HEK293 (cell line): ENCODE measurements at regions of chr11 and their contacts with region 1.

Region 1: DNA sequence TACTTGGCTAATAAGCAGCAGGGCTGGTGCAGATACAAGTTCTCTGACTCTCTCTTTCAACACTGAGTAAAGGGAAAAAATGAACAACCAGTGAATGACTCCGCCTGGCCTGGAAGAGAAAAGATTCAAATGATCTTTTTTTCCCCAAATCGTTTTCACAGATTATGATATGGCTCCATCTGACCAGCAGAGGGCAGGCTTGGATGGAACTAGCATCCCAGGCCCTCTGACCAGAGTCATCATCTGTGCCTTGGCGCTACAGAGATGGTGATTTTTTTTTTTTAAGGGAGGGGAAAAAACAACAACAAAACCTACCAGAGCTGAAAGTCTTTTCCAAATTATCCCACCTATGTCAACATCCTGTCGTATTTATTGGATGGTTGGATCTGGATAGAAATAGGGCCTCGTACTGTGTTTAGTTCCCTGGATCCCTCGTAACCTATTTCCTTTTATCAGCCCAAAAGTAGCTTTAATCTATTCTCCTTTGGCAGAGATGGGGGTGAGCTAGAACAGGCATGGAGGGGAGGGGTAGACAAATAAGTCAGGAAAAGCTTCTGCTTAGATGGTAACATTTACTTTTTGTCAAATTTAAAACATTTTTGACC is 69.7 kb downstream of the PRSS23 start:
- H3K4me3 ChIP-seq: no peak overlapping the region
- H3K27ac ChIP-seq: no peak overlapping the region
- H3K4me1 ChIP-seq: no peaks in the 10 kb centered on the region
- CTCF ChIP-seq: no peak

Region 2: GRCh38 chr11:85407648-85408047 is 1462.4 kb before region 1 on chr11:
- CTCF ChIA-PET with region 1: no interaction called
- POLR2A ChIA-PET with region 1: no interaction called
- H3K4me3 ChIP-seq: no peak overlapping the region
- H3K27ac ChIP-seq: no peak overlapping the region
- H3K4me1 ChIP-seq: no peaks in the 10 kb centered on the region
- CTCF ChIP-seq: no peak

Region 3: DNA sequence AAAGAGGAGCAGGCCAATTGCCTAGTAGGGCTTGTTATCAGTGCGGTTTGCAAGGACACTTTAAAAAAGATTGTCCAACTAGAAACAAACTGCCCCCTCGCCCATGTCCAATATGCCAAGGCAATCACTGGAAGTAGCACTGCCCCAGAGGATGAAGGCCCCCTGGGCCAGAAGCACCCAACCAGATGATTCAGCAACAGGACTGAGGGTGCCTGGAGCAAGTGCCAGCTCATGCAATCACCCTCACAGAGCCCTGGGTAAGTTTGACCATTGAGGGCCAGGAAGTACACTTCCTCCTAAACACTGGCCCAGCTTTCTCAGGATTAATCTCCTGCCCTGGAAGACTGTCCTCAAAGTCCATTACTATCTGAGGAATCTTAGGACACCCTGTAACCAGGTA is 21.2 kb before region 1 on chr11:
- CTCF ChIA-PET with region 1: interaction called, 10 read pairs
- POLR2A ChIA-PET with region 1: no interaction called
- H3K4me3 ChIP-seq: no peak overlapping the region
- H3K27ac ChIP-seq: no peak overlapping the region
- H3K4me1 ChIP-seq: no peaks in the 10 kb centered on the region
- CTCF ChIP-seq: no peak

Region 4: GRCh38 chr11:86904001-86904400 is 33.9 kb after region 1 on chr11:
- CTCF ChIA-PET with region 1: interaction called, 16 read pairs
- POLR2A ChIA-PET with region 1: no interaction called
- H3K4me3 ChIP-seq: no peak overlapping the region
- H3K27ac ChIP-seq: no peak overlapping the region
- H3K4me1 ChIP-seq: no peaks in the 10 kb centered on the region
- CTCF ChIP-seq: no peak

Region 5: DNA sequence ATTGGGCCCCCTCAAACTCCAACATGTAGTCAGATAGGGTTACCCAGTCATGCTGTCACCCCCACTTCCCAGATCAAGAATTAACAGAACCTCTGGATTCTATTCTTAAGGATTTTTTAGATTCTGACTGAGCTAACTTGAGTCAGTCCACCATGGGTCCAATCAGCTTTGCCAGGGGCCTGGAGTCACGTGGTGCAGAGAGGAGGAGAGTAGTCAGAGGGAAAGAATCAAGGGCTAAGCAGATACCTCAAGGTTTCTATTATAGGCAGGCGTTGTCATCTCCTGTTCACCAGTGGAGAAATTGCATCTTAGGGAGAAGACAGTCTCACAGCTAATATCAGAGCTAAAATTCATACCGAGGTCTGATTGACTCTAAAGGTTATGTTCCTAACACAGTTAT is 56.9 kb after region 1 on chr11:
- CTCF ChIA-PET with region 1: interaction called, 144 read pairs
- POLR2A ChIA-PET with region 1: no interaction called
- H3K4me3 ChIP-seq: no peak overlapping the region
- H3K27ac ChIP-seq: no peak overlapping the region
- H3K4me1 ChIP-seq: peaks cover 7% of the 10 kb centered on the region; the same call in 1 of the 2 replicates
- CTCF ChIP-seq: no peak

Region 6: GRCh38 chr11:87290304-87290922 is 420.3 kb after region 1 on chr11:
- CTCF ChIA-PET with region 1: interaction called, 19 read pairs
- POLR2A ChIA-PET with region 1: no interaction called
- H3K4me3 ChIP-seq: no peak overlapping the region
- H3K27ac ChIP-seq: no peak overlapping the region
- H3K4me1 ChIP-seq: no peaks in the 10 kb centered on the region
- CTCF ChIP-seq: no peak

Region 7: GRCh38 chr11:87391496-87391895 is 521.4 kb after region 1 on chr11:
- CTCF ChIA-PET with region 1: no interaction called
- POLR2A ChIA-PET with region 1: no interaction called
- H3K4me3 ChIP-seq: no peak overlapping the region
- H3K27ac ChIP-seq: no peak overlapping the region
- H3K4me1 ChIP-seq: no peaks in the 10 kb centered on the region
- CTCF ChIP-seq: no peak